Transverse colon (tissue), 4 donors: ENCODE measurements at regions of chr18 and their contacts with region 1.

Region 1: DNA sequence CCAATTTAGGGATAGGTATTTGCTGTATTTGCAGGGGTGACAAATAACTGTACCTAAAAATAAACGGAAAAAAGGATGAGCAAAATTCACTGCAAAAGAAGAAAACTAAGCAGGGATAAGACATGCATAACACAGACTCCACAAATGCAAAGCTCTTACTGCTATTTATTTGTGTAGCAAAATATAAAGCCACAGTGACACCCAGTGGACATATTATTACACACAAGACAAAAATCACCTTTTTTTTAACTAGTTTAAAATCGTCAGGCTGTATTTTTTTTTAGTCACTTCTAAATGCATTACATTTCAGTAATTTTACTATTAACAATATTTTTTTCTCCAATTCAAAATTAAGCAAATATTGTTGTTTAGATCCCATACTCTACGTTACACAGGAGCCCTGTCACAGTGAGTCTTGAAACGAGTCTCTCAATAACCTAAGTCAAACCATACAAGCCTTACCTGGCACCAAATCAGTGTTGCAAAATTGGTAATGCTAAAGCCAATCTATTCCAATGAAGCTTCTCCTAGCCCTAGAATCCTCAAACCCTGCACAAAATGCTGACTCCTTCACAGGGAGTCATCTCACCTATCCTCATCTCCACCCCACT is 23.7 kb downstream of the METTL4 start:
- DNase-seq: no peak
- H3K4me3 ChIP-seq: no peak overlapping the region
- H3K27ac ChIP-seq: no peak overlapping the region
- H3K4me1 ChIP-seq: no peaks in the 10 kb centered on the region
- H3K27me3 ChIP-seq: no peaks in the 10 kb centered on the region
- CTCF ChIP-seq: peak; percentile 48 to 61 (median 52)
- EP300 ChIP-seq: no peak
- POLR2A ChIP-seq: no peak

Region 2: GRCh38 chr18:864872-865273 is 1682.7 kb before region 1 on chr18:
- in situ Hi-C with region 1: loop called in 2 of 4 experiments (anchors 25 kb)
- intact Hi-C with region 1: no loop called
- DNase-seq: peak; percentile 60
- H3K4me3 ChIP-seq: no peak overlapping the region
- H3K27ac ChIP-seq: no peak overlapping the region
- H3K4me1 ChIP-seq: no peaks in the 10 kb centered on the region
- H3K27me3 ChIP-seq: peaks cover 39% of the 10 kb centered on the region
- CTCF ChIP-seq: peak; percentile 87 to 93 (median 90)
- EP300 ChIP-seq: no peak
- POLR2A ChIP-seq: no peak

Region 3: DNA sequence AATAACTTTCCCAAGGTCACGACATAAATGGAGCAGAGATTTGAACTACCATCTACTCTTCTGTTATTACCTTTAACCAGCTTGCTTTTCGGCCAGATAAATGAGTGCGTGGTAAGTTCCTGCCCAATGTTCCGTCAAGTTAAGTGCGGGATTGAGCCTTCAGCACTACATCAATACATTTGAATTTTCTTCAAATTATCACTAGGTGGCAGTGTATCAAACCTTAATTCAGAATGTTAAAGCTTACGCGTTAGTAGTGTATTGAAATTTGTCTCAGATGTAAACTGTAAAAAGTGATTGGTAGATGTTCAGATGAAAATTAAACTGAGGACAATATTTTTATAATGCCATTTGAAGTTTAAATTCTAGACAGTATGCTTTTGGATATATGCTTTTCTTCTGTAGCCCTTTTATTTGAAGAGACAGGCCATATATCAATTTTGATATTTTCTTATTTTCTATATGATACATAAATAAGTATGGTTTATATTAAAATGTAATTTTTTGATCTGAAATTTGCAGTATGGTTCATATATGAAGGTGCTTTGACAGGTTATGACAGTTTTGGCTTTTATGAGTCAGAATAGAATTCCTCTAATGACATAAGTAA is 961.6 kb before region 1 on chr18:
- in situ Hi-C with region 1: loop called in 2 of 4 experiments (anchors 25 kb)
- intact Hi-C with region 1: no loop called
- DNase-seq: no peak
- H3K4me3 ChIP-seq: no peak overlapping the region
- H3K27ac ChIP-seq: no peak overlapping the region
- H3K4me1 ChIP-seq: no peaks in the 10 kb centered on the region
- H3K27me3 ChIP-seq: no peaks in the 10 kb centered on the region
- CTCF ChIP-seq: peak in 3 of 5 experiments; percentile 16 to 39 (median 32)
- EP300 ChIP-seq: no peak
- POLR2A ChIP-seq: no peak

Region 4: DNA sequence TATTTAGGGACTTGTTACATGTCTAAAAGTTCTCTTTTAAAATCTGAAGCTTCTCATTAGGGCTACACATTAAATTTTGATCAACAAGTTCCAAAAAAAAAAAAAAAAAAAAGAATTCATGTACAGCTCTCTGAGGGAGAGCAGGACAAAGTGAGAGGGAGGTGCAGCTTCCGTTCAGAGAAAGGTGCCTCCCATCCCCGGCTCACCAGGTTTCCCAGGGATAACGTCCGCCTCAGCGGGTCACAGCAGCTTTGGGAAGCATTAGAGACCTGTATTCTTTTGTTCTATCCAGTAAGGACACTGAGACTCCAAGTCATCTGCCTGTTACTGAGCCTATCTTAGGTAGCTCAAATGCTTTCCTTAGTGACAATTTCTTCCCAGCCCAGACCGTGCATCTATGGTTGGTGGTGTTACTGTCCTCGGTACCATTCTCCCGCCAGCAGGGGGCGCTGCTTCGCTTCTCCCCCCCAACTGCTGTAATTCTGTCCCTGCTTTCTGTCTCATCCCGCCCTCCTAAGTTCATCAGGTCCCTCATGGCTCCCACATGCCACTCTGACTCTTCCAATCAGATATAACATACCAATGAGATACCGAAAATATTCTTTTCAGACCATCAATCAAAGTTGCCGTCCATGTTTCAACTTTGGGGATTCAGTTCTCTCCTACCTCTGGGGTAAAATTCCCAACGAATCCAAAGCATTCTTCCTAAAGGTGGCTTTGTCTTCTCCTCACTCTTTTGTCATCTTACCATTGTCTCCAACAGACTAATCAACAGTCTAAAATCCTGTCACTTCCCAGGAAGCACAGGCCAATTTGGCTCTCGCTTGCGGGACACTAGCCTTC is 442.7 kb before region 1 on chr18:
- in situ Hi-C with region 1: loop called in 1 of 4 experiments (anchors 25 kb)
- intact Hi-C with region 1: no loop called
- DNase-seq: peak; percentile 42
- H3K4me3 ChIP-seq: no peak overlapping the region
- H3K27ac ChIP-seq: no peak overlapping the region
- H3K4me1 ChIP-seq: no peaks in the 10 kb centered on the region
- H3K27me3 ChIP-seq: no peaks in the 10 kb centered on the region
- CTCF ChIP-seq: peak; percentile 47 to 67 (median 62)
- EP300 ChIP-seq: no peak
- POLR2A ChIP-seq: no peak

Region 5: DNA sequence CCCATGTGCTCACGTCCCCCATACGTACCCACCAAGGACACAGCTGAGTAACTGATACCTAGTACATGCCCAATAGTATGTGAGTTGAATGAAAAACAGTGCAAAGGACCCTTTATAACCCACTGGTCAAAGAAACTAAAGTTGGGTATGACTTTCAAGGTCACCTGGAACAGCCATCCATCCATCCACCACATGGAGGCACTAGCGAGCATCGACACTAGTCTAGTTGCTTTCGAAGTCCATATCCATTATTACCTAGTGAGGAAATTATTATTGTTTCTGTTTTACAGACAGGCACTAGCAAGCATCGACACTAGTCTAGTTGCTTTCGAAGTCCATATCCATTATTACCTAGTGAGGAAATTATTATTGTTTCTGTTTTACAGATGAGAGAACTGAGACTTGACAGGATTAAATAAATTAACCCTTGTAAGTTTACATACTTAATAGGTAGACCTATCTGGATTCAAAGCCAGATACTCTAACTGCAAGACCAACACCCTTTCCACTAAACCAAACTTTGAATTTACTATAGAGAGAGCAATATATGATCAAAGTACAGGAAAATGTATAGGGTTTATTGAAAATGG is 209.9 kb before region 1 on chr18:
- in situ Hi-C with region 1: loop called in 2 of 4 experiments (anchors 10 to 25 kb)
- intact Hi-C with region 1: loop called (anchors 10 kb)
- DNase-seq: peak; percentile 19
- H3K4me3 ChIP-seq: no peak overlapping the region
- H3K27ac ChIP-seq: no peak overlapping the region
- H3K4me1 ChIP-seq: no peaks in the 10 kb centered on the region
- H3K27me3 ChIP-seq: no peaks in the 10 kb centered on the region
- CTCF ChIP-seq: peak; percentile 31 to 48 (median 38)
- EP300 ChIP-seq: no peak
- POLR2A ChIP-seq: no peak